ENCODE measurements at regions of chr9 and their contacts with region 1.

Region 1: GRCh38 chr9:107172160-107172978 is 110.7 kb upstream of the RAD23B start:
- DNase-seq: peak; percentile 67
- ATAC-seq: peak; percentile 75
- H3K4me3 ChIP-seq: peak overlapping the region; percentile 39; the same call in 1 of the 2 replicates
- H3K27ac ChIP-seq: no peak overlapping the region
- H3K4me1 ChIP-seq: peaks cover 18% of the 10 kb centered on the region
- H3K27me3 ChIP-seq: no peaks in the 10 kb centered on the region
- CTCF ChIP-seq: peak; percentile 83 to 94 (median 94); a peak in 5 of 6 replicates
- EP300 ChIP-seq: no peak
- POLR2A ChIP-seq: no peak
- RAD21 ChIP-seq: peak; percentile 92

Region 2: DNA sequence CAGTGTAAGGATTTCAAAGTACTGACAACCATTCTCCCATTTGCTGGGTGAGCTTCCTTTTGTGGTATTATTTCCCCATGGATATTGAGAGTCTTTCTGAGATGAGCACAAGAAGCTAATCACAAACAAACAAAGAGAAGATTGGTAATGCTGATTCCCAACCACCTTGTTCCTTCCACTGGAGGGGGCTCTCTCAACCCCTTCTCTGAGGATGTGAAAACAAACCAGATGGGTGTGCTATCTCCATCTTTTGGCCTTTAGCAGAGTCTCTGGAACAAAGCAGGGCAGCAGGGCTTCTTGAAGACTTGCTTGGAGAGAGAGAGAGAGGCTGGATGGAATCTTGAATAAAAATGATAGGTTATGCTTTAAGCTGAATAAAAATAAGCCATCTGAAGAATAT is 886.1 kb before region 1 on chr9:
- CTCF ChIA-PET with region 1: interaction called, 5 read pairs
- POLR2A ChIA-PET with region 1: no interaction called
- RAD21 ChIA-PET with region 1: interaction called, 6 read pairs
- SMC1A ChIA-PET with region 1: no interaction called
- in situ Hi-C with region 1: no loop called
- intact Hi-C with region 1: loop called (anchors 10 kb)
- DNase-seq: no peak
- ATAC-seq: peak; percentile 87
- H3K4me3 ChIP-seq: no peak overlapping the region
- H3K27ac ChIP-seq: no peak overlapping the region
- H3K4me1 ChIP-seq: no peaks in the 10 kb centered on the region
- H3K27me3 ChIP-seq: no peaks in the 10 kb centered on the region
- CTCF ChIP-seq: peak in 2 of 3 experiments; percentile 41 to 45; a peak in 4 of 6 replicates
- EP300 ChIP-seq: no peak
- POLR2A ChIP-seq: no peak
- RAD21 ChIP-seq: no peak

Region 3: GRCh38 chr9:107158321-107158720 is 14.0 kb before region 1 on chr9:
- CTCF ChIA-PET with region 1: interaction called, 100 read pairs
- POLR2A ChIA-PET with region 1: interaction called, 5 read pairs
- RAD21 ChIA-PET with region 1: interaction called, 42 read pairs
- SMC1A ChIA-PET with region 1: interaction called, 49 read pairs
- in situ Hi-C with region 1: no loop called
- intact Hi-C with region 1: no loop called
- DNase-seq: no peak
- ATAC-seq: peak; percentile 99
- H3K4me3 ChIP-seq: no peak overlapping the region
- H3K27ac ChIP-seq: no peak overlapping the region
- H3K4me1 ChIP-seq: no peaks in the 10 kb centered on the region
- H3K27me3 ChIP-seq: peaks cover 0 to 3% of the 10 kb centered on the region in 2 experiments; a peak in 1 of 4 replicates
- CTCF ChIP-seq: peak; percentile 41 to 62 (median 56); a peak in 5 of 6 replicates
- EP300 ChIP-seq: no peak
- POLR2A ChIP-seq: no peak
- RAD21 ChIP-seq: peak; percentile 45

Region 4: GRCh38 chr9:107218829-107219485 is 46.6 kb after region 1 on chr9:
- CTCF ChIA-PET with region 1: interaction called, 28 read pairs
- POLR2A ChIA-PET with region 1: interaction called, 47 read pairs
- RAD21 ChIA-PET with region 1: interaction called, 115 read pairs
- SMC1A ChIA-PET with region 1: interaction called, 94 read pairs
- in situ Hi-C with region 1: no loop called
- intact Hi-C with region 1: no loop called
- DNase-seq: peak; percentile 53
- ATAC-seq: peak; percentile 85
- H3K4me3 ChIP-seq: no peak overlapping the region
- H3K27ac ChIP-seq: peak overlapping the region; percentile 31; the same call in 1 of the 2 replicates
- H3K4me1 ChIP-seq: peaks cover 14% of the 10 kb centered on the region; the same call in 1 of the 2 replicates
- H3K27me3 ChIP-seq: no peaks in the 10 kb centered on the region
- CTCF ChIP-seq: no peak
- EP300 ChIP-seq: peak; percentile 49 to 83; a peak in 3 of 4 replicates
- POLR2A ChIP-seq: no peak
- RAD21 ChIP-seq: no peak

Region 5: GRCh38 chr9:107269681-107270080 is 97.3 kb after region 1 on chr9:
- CTCF ChIA-PET with region 1: interaction called, 8 read pairs
- POLR2A ChIA-PET with region 1: no interaction called
- RAD21 ChIA-PET with region 1: interaction called, 11 read pairs
- SMC1A ChIA-PET with region 1: interaction called, 19 read pairs
- in situ Hi-C with region 1: no loop called
- intact Hi-C with region 1: loop called (anchors 5 kb)
- DNase-seq: no peak
- ATAC-seq: no peak
- H3K4me3 ChIP-seq: no peak overlapping the region
- H3K27ac ChIP-seq: no peak overlapping the region
- H3K4me1 ChIP-seq: no peaks in the 10 kb centered on the region; the same call in 1 of the 2 replicates
- H3K27me3 ChIP-seq: no peaks in the 10 kb centered on the region
- CTCF ChIP-seq: no peak
- EP300 ChIP-seq: no peak
- POLR2A ChIP-seq: no peak
- RAD21 ChIP-seq: no peak

Region 6: DNA sequence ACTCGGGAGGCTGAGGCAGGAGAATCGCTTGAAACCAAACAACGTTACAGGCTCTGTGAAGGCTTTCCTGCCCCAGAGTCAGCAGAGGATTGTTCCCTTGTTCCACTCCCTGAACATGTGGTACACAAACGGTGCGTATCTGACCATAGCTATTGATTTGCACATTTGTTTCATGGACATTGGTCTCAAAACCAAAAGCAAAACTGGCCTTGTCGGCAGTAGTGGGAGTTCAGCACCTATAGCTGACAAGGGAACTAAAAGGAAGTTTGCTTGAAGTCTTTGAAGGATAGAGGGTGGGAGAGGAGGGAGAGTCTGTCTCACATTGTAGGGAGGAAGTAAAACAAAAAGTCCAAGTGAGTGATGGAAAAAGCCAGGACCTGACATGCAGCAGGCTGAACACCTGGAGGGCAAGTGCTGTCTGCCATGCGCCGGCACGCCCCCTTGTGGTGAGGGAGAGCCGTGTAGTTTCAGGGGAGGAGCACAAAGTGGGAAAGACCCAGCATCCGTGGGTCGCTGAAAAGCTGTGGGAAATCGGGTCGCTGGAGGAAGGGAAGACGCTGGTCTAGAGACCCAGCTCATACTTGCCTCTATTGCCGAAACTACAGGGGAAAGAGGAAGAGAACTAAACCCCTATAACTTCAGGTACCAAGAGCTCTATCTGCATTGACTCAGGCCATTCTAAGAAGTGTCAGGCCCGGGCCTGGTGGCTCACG is 168.7 kb after region 1 on chr9:
- CTCF ChIA-PET with region 1: interaction called, 29 read pairs
- POLR2A ChIA-PET with region 1: interaction called, 11 read pairs
- RAD21 ChIA-PET with region 1: interaction called, 30 read pairs
- SMC1A ChIA-PET with region 1: interaction called, 16 read pairs
- in situ Hi-C with region 1: no loop called
- intact Hi-C with region 1: loop called (anchors 5 kb)
- DNase-seq: peak; percentile 57
- ATAC-seq: peak; percentile 92
- H3K4me3 ChIP-seq: no peak overlapping the region
- H3K27ac ChIP-seq: no peak overlapping the region
- H3K4me1 ChIP-seq: peaks cover 4% of the 10 kb centered on the region; the same call in 1 of the 2 replicates
- H3K27me3 ChIP-seq: no peaks in the 10 kb centered on the region
- CTCF ChIP-seq: peak; percentile 93 to 96 (median 95); a peak in 5 of 6 replicates
- EP300 ChIP-seq: no peak
- POLR2A ChIP-seq: peak; percentile 39; the same call in 1 of the 2 replicates
- RAD21 ChIP-seq: peak; percentile 81

Measured in GM12878 (cell line).